AG04449 (cell line): ENCODE measurements at regions of chr16 and their contacts with region 1.

Region 1: DNA sequence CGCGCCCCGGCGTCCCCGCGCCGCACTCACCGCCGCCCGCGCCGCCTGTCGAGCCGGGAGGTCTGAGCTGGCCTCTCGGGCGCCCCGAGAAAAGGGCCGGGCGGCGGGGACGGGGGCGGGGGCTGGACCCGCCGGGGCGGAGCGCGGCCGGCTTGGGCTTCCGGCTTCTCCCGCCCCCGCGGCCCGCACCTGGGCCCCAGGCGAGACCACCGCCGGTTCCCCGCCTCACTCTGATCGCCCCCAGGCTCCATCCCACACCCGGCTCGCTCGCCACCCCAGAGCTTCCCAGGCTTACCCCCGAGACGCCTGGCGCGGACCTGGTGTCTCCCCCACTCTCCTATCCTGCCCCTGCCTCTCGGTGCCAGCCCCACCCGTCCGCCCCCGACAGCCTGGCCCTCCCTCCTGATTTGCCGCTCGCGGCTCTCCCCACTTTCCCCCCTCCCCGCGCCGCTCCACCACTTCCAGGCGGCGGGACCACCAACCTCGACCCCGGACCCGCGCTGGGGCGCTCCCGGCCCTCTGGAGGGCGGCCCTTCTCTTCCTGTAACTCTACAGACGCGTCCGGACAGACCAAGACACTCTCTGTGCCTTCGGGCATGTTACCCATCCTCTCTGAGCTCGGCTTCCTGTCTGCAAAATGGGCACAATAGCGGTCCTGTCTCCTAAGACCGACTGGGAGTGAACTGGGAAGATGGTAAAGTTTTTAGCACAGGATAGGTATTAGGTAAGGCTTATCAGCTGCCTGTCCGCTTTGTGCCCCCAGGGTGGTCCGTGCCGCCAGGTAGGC is at the start of gene LITAF:
- DNase-seq: no peak
- H3K4me3 ChIP-seq: peak within 1 kb of the TSS; percentile 77
- CTCF ChIP-seq: no peak

Region 2: GRCh38 chr16:11396241-11397048 is 190.6 kb before region 1 on chr16:
- CTCF ChIA-PET with region 1: no interaction called
- POLR2A ChIA-PET with region 1: no interaction called
- DNase-seq: no peak
- H3K4me3 ChIP-seq: no peak overlapping the region
- CTCF ChIP-seq: peak; percentile 98

Region 3: GRCh38 chr16:11597239-11598101 is 10.4 kb after region 1 on chr16:
- CTCF ChIA-PET with region 1: interaction called, 10 read pairs
- POLR2A ChIA-PET with region 1: interaction called, 3 read pairs
- DNase-seq: no peak
- H3K4me3 ChIP-seq: no peak overlapping the region
- CTCF ChIP-seq: no peak